ENCODE measurements at regions of chr6 and their contacts with region 1.

Region 1: GRCh38 chr6:168999392-168999791 is 254.3 kb downstream of the THBS2 start:
- DNase-seq: no peak
- H3K4me3 Mint-ChIP-seq: no peak overlapping the region
- H3K27ac Mint-ChIP-seq: no peak overlapping the region
- H3K4me1 Mint-ChIP-seq: no peaks in the 10 kb centered on the region
- H3K27me3 Mint-ChIP-seq: peaks cover 2% of the 10 kb centered on the region

Region 2: DNA sequence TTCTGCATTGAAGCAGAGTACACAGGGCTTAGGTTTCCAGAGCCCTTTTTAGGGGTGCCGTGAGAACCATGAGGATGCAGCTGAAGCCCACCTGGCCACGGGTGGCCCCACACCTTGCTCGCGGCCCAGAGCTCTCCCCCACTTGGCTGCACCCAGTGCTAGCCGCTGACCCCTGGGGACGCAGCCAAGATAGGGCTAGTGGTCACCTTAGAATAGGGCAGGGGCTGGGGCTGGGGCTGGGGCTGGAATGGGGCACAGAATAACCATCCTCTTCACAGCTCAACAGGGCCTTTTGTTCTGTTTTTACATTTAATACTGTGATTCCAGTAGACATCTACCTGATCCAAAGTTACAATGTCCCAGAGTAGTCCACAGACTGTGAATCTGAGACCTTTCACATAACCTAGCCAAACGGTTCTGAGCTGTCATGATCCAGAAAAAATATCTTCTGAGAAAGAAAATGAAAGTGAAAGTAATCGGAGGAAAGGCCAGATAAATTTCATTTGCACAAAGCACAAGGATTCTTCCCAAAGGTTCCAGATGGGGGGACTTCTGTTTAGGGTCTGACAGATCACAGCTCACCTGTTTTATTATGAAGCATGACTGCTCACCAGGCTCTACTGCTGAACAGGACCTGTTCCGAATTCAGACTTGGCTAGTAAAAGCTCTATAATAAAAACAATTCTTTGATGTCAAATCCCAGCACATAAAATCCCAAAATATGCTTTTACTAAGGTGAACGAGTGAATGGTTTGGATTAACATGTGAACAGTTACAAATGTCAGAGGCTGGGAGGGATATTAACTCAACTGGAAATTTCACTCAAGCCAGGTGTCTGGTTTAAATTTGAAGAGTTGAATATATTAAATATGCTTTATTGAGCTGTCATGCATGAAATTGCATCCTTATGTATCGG is 147.7 kb before region 1 on chr6:
- CTCF ChIA-PET with region 1: no interaction called
- POLR2A ChIA-PET with region 1: no interaction called
- intact Hi-C with region 1: loop called (anchors 5 kb)
- DNase-seq: no peak
- H3K4me3 Mint-ChIP-seq: no peak overlapping the region
- H3K27ac Mint-ChIP-seq: no peak overlapping the region
- H3K4me1 Mint-ChIP-seq: peaks cover 10% of the 10 kb centered on the region
- H3K27me3 Mint-ChIP-seq: no peaks in the 10 kb centered on the region

Region 3: GRCh38 chr6:169009628-169010027 is 10.2 kb after region 1 on chr6:
- CTCF ChIA-PET with region 1: no interaction called
- POLR2A ChIA-PET with region 1: no interaction called
- intact Hi-C with region 1: no loop called
- DNase-seq: no peak
- H3K4me3 Mint-ChIP-seq: no peak overlapping the region
- H3K27ac Mint-ChIP-seq: no peak overlapping the region
- H3K4me1 Mint-ChIP-seq: no peaks in the 10 kb centered on the region
- H3K27me3 Mint-ChIP-seq: no peaks in the 10 kb centered on the region